MCF 10A (cell line): ENCODE measurements at regions of chr10 and their contacts with region 1.

Region 1: DNA sequence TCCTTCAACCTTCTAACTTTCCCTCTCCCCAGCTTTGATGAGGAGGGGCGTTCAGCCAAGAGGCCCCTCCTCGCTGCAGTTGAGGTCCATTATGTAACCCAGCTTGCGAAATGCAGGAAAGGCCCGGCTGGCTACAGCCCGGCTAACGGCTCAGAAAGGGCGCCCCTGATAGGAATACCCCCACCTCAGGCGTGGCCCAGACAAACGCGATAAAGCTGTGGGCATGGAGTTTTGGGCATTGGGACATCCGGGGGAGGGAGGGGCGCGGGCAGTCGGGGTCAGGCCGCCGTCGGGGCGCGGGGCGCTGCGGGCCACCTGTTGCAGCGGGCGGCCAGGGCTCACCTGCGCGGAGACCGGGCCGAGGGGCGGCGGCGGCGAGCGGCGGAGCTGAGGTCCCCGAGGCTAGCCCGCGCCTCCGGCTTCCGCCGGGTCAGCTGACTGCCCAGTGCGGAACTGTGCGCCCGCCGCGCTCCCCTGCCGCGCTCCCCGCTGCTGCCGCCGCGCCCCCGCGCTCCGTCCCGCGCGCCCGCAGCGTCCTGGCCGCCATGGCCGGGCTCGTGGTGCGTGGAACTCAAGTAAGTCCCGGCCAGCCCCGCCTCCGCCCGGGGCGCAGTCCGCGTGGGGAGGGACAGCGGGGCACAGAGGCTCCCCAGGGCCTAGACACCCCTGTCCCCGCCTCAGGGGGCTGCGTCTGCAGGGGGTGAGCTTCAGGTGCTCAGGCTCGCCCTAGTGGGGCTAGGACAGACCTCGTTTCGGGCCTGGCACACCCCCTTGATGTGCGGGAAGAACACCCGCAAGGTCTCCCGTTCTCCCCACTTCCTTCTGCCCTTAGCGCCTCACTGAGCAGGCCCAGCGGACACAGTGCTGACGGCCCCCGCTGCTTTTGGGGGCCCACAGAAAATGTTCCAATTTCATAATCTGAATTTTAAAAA is at the start of gene LRMDA:
- DNase-seq: peak; percentile 45
- H3K4me3 Mint-ChIP-seq: no peak within 1 kb of the TSS
- H3K27ac Mint-ChIP-seq: peak within 1 kb of the TSS; percentile 46
- H3K4me1 Mint-ChIP-seq: peaks cover 27% of the 10 kb centered on the region
- H3K27me3 Mint-ChIP-seq: no peaks in the 10 kb centered on the region
- CTCF ChIP-seq: no peak
- total RNA-seq, gene LRMDA: not detected in 2 replicates

Region 2: DNA sequence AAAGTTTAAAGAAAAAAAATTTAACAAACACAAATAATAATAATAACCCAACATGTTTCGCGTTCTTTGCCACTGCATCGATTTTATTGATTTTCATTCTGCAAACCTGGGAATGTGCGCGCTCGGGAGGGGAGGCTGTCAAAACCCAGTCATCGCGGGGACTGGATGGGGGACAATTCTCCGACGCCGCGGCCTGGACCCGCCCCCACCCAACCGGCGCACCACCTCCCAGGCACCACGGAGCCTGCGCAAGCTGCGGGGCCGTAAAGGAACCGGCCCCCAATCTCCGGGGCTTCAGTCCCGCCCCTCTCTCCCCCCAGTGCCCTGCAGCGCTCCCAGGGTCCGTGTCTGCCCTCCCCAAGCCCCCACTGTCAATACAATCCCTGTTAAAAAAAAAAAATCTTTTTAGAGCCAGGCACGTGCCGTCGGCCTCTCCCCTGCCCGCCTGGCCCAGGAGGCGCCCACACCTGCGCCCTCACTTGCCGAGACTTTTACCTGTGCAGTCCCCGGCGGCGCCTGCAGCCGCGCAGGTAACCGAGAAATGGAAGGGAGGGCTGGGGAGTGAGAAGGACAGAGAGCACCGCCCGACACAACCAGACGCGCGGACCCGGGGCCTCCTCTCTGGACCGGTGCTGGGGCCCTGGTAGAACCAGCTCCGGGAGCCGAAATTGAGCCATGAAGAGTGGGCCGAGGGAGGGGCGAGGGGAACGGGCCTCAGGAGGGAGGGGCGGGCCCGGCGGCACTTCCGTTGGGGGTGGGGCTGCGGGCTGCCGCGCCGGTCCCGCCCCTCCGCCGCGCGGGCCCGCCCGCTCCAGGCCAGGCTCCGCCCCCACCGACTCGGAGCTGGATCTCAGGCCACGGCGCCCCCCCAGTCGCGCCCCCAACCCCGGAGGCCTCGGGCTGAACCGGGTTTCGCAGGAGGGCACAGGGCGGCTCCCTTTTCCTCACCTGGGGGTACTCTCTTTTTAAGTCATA is 22.2 kb before region 1 on chr10:
- CTCF ChIA-PET with region 1: interaction called, 5 read pairs
- POLR2A ChIA-PET with region 1: interaction called, 54 read pairs
- intact Hi-C with region 1: no loop called
- DNase-seq: peak; percentile 66
- H3K4me3 Mint-ChIP-seq: peak overlapping the region; percentile 91
- H3K27ac Mint-ChIP-seq: peak overlapping the region; percentile 74
- H3K4me1 Mint-ChIP-seq: peaks cover 6% of the 10 kb centered on the region
- H3K27me3 Mint-ChIP-seq: no peaks in the 10 kb centered on the region
- CTCF ChIP-seq: no peak

Region 3: GRCh38 chr10:75417522-75417927 is 13.9 kb before region 1 on chr10:
- CTCF ChIA-PET with region 1: interaction called, 3 read pairs
- POLR2A ChIA-PET with region 1: interaction called, 14 read pairs
- intact Hi-C with region 1: no loop called
- DNase-seq: no peak
- H3K4me3 Mint-ChIP-seq: no peak overlapping the region
- H3K27ac Mint-ChIP-seq: no peak overlapping the region
- H3K4me1 Mint-ChIP-seq: no peaks in the 10 kb centered on the region
- H3K27me3 Mint-ChIP-seq: no peaks in the 10 kb centered on the region
- CTCF ChIP-seq: no peak

Region 4: DNA sequence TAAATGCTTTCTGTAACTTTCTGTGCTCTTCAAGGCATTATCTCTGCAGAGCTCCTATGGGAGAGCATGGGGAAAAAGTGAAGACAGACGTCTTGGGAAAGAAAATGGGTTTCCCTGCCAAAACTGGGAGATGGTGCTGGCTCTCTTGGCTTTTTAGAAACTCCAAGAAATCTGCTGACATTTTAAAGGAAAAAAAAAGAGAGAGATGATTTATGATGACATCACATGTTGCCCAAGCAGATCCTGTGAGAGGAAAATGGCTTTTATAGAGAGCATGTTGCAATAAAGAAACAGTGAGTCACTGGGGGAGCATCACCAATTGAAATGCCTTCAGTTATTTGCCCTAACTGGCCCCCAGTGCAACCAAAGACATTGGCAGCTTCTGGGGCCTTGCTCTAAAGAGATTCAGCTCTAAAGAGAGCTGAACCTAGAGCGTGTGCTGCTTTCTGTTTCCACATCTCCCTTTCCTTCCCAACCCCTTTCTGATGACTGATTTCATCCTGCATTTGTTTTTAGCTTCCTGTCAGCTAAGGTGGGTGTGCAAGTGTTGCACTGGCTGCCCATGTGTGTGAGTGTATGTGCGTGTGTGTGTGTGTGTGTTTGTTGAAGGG is 37.7 kb after region 1 on chr10:
- CTCF ChIA-PET with region 1: interaction called, 3 read pairs
- POLR2A ChIA-PET with region 1: interaction called, 19 read pairs
- intact Hi-C with region 1: no loop called
- DNase-seq: peak; percentile 97
- H3K4me3 Mint-ChIP-seq: peak overlapping the region; percentile 4
- H3K27ac Mint-ChIP-seq: peak overlapping the region; percentile 0
- H3K4me1 Mint-ChIP-seq: peaks cover 22% of the 10 kb centered on the region
- H3K27me3 Mint-ChIP-seq: no peaks in the 10 kb centered on the region
- CTCF ChIP-seq: no peak

Region 5: DNA sequence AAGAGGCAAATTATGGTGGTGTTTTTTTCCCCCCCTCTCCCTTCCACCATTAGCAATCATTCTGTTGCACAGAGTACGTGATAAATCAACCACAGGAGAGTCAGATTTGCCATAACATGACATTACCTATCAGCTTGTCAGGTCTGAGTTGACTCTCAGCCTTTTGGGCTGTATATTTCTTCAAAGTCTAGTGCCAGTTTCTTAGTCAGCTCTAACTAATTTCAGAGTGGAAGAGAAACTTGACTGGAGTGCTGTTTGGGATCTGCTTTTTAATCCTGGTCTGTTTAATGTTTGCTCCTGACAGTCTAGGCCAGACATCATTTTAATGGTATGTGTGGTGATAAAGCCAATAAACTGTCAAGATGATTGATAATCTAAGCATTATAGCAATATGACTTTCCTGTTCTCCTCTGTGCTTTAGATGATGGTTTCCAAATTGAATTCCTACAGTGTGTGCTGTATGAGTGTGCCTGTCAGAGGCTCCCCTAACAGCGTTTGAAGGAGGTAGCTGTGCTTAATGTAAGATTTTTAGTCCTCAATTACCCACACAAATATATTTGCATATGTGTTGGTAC is 76.9 kb after region 1 on chr10:
- CTCF ChIA-PET with region 1: interaction called, 3 read pairs
- POLR2A ChIA-PET with region 1: interaction called, 15 read pairs
- intact Hi-C with region 1: no loop called
- DNase-seq: no peak
- H3K4me3 Mint-ChIP-seq: no peak overlapping the region
- H3K27ac Mint-ChIP-seq: no peak overlapping the region
- H3K4me1 Mint-ChIP-seq: peaks cover 19% of the 10 kb centered on the region
- H3K27me3 Mint-ChIP-seq: no peaks in the 10 kb centered on the region
- CTCF ChIP-seq: no peak

Region 6: DNA sequence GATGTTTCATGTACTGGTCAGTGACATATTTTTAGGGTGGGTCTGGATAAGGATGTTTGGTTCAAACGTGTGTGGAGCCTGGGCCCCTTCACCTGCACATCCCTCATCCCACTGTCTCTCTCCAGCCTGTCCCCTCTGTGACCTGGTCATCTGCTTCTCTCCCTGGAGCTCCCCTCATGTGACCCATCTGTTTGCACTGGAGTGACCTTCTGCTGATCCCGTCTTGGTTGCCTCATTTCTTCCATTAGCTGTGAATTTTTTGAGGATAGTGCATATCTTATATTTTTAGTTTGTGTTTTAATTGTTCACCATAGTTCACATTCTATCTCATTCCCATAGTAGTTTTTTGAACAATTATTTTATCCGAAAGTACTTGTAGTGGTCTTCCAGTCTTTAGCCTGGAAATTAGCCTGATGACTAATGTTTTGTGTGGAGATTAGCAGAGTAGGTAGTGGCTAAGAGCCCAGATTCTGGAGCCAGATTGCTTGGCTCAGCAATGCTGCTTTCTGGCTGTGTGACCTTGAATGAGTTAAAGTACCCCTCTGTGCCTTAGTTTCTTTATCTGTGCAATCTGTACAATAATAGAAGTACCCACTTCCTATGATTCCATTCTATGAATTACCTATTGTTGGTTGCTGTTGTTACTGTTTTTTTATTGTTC is 224.5 kb after region 1 on chr10:
- CTCF ChIA-PET with region 1: no interaction called
- POLR2A ChIA-PET with region 1: no interaction called
- intact Hi-C with region 1: no loop called
- DNase-seq: peak; percentile 33
- H3K4me3 Mint-ChIP-seq: no peak overlapping the region
- H3K27ac Mint-ChIP-seq: no peak overlapping the region
- H3K4me1 Mint-ChIP-seq: peaks cover 4% of the 10 kb centered on the region
- H3K27me3 Mint-ChIP-seq: peaks cover 32% of the 10 kb centered on the region
- CTCF ChIP-seq: no peak